ENCODE measurements at regions of chr1 and their contacts with region 1.

Region 1: GRCh38 chr1:160193091-160193819 is 2.9 kb downstream of the CASQ1 start:
- ATAC-seq: peak; percentile 85 to 94 (median 93)
- H3K4me3 ChIP-seq: no peak overlapping the region
- H3K27ac ChIP-seq: peak overlapping the region; percentile 40 to 52
- H3K4me1 ChIP-seq: peaks cover 17 to 23% of the 10 kb centered on the region in 2 donors

Region 2: DNA sequence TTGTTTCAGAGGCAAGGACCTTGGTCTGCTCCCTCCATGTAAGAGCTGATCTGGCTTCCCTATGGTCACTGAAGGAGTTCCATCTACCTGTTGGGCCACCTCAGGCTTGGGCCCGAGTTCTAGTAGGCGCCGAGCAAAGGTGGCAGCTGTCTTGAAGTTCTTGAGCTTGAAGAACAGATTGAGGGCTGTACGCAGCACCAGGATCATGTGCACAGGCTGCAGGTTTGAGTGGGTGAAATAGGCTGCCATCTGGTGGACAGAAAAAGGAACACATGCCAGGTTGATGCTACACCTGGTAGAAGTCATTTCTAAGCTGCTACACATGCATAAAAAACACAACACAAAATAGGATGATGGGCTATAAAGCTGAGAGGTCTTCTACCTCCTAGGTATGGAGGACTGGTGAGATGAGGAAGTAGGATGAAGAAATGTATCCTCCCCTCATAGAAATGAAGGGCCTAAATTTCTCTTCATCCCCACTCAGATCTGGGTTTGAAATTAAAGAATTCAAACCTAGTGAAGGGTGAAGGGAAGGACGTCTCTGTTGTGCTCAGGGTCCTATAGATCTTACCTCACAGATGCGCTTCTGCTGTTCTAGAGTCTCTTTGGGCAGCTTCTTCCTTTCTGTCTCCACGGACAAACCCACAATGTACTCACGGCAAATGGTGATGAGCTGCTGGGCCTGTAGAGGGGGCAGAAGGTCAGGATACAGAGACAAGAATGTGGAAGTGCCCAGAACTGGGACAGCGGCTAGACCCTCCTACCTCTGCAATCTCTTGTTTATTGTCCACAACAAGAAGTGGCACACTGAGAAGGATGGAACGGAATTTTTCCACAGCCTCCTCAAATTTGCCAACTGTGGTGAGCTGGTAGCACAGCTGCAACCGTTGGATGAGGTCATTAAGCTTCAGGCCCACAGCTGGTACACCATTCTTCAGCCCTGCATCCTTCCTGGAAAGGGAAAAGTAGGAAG is 98.3 kb after region 1 on chr1:
- in situ Hi-C with region 1: loop called in 1 of 9 experiments (anchors 10 kb)
- ATAC-seq: peak; percentile 81 to 97 (median 92)
- H3K4me3 ChIP-seq: no peak overlapping the region
- H3K27ac ChIP-seq: no peak overlapping the region
- H3K4me1 ChIP-seq: no peaks in the 10 kb centered on the region

Measured in motor neuron (in vitro differentiated cells).